Activated CD4-positive, alpha-beta T cell treated with anti-CD3 and anti-CD28 coated beads for 36 hours (primary cell): ENCODE measurements at regions of chr19 and their contacts with region 1.

Region 1: DNA sequence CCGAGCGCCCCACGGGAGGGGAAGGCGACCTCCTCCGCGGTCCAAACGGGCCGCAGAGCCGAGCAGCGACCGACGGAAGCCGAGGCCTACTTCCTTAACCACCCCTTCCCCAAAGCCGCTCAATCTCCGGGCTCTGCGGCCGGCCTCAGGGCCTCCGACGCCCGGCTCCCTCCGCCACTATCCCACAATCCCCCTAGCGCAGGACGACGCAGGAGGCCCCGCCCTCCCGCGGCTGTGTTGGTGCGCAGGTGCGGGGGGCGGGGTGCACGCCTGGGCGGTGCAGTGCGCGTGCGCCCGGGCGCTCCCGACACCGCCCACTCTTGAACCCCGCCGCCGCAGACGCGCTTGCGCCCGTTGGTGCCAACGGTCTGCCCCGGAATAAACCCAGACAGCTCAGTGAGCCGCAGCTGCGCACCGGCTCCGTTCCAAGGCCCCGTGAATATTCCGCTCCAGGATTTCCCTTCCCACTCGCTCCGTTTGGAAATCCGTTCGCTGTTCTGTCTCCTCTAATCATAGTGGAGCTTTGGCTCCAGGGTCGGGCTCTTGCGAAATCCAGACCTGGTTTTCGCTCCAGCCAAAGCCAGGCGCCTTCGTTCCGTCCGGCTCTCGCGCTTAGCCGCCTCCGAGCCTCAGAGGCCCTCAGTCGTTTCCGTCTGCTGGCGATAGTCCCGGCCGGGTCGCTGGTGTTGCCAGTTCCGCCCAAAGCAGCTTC is at the start of gene PPP6R1:
- DNase-seq: peak; percentile 98
- ATAC-seq: peak; percentile 69
- H3K4me3 Mint-ChIP-seq: peak within 1 kb of the TSS; percentile 95
- H3K27ac Mint-ChIP-seq: peak within 1 kb of the TSS; percentile 98
- H3K4me1 Mint-ChIP-seq: peaks cover 22% of the 10 kb centered on the region
- H3K27me3 Mint-ChIP-seq: no peaks in the 10 kb centered on the region
- total RNA-seq, gene PPP6R1: 177 to 201 TPM

Region 2: DNA sequence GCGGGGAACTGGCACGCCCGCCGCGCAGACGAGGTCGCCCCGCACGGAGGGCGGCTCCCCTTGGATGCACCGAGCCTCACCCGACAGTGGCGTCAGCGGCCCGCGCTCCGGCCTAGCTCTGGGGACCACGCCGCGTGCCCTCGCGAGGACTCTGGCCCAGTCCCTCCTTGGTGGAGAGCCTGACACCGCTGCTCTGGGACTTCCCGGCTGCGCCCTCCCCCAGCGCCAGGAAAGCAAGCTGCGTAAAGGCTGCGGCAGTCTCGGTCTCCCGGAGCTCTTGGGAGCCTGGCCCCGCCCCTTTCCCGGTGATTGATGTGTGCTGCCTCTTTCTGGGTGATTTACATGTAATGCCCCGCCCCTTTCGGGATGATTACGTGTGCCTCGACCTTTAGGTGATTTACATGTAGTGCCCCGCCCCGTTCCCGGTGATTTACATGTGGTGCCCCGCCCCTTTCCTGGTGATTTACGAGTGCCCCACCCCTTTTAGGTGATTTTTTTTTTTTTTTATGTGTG is 795.4 kb before region 1 on chr19 and contains the start of gene LENG9:
- CTCF ChIA-PET with region 1: no interaction called
- POLR2A ChIA-PET with region 1: no interaction called
- intact Hi-C with region 1: loop called in 1 of 2 experiments (anchors 2 kb)
- DNase-seq: peak; percentile 100
- ATAC-seq: peak; percentile 69
- H3K4me3 Mint-ChIP-seq: peak within 1 kb of the TSS; percentile 80
- H3K27ac Mint-ChIP-seq: peak within 1 kb of the TSS; percentile 91
- H3K4me1 Mint-ChIP-seq: peaks cover 26% of the 10 kb centered on the region
- H3K27me3 Mint-ChIP-seq: peaks cover 6% of the 10 kb centered on the region
- total RNA-seq, gene LENG9: 5.0 to 5.1 TPM

Region 3: GRCh38 chr19:55117636-55118391 is 141.2 kb before region 1 on chr19 and contains the start of gene PPP1R12C:
- CTCF ChIA-PET with region 1: interaction called, 3 read pairs
- POLR2A ChIA-PET with region 1: no interaction called
- intact Hi-C with region 1: loop called in 1 of 2 experiments (anchors 1 kb)
- DNase-seq: peak; percentile 99
- ATAC-seq: peak; percentile 96
- H3K4me3 Mint-ChIP-seq: peak within 1 kb of the TSS; percentile 95
- H3K27ac Mint-ChIP-seq: peak within 1 kb of the TSS; percentile 97
- H3K4me1 Mint-ChIP-seq: peaks cover 24% of the 10 kb centered on the region
- H3K27me3 Mint-ChIP-seq: peaks cover 2% of the 10 kb centered on the region
- total RNA-seq, gene PPP1R12C: 66.1 to 69.8 TPM

Region 4: GRCh38 chr19:55279770-55280643 is 21.0 kb after region 1 on chr19 and contains the start of gene HSPBP1:
- CTCF ChIA-PET with region 1: interaction called, 6 read pairs
- POLR2A ChIA-PET with region 1: interaction called, 12 read pairs
- intact Hi-C with region 1: loop called (anchors 1 kb)
- DNase-seq: peak; percentile 98
- ATAC-seq: peak; percentile 92
- H3K4me3 Mint-ChIP-seq: peak within 1 kb of the TSS; percentile 100
- H3K27ac Mint-ChIP-seq: peak within 1 kb of the TSS; percentile 98
- H3K4me1 Mint-ChIP-seq: peaks cover 24% of the 10 kb centered on the region
- H3K27me3 Mint-ChIP-seq: no peaks in the 10 kb centered on the region
- total RNA-seq, gene HSPBP1: 41.1 to 45.2 TPM

Region 5: DNA sequence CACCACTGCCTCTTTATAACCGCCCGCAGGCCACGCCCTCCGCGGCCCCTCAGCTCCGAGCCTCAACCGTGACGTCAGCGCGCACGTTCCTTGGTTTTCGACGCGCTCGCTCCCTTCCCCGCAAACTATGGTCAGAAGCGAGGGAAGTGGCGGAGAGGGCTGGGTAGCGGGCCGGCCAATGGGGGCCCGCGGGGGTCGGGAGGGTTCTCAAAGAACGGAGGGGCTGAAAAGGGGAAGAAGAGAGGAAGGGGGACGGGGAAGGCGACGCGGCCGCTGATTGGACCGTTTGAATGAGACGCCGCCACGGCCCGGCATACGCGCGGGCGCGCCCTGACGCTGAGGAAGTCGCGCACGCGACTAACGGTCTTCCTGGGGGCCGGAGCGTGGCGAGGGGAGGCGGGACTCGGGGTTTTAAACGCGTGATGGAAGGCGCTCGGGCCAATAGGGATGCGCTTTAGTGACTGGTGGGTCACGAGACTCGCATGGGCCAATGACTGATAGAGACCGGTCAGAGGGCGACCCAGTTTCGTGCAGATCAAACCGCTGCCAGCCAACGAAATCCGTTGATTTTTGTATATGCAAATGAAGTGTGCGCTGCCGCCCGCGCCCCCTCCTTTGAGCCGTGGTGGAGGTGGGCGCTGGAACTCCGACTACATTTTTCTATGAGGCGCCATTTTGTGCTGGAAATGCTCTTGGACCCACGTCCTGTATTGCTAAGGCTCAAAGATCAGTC is 149.0 kb after region 1 on chr19:
- CTCF ChIA-PET with region 1: no interaction called
- POLR2A ChIA-PET with region 1: interaction called, 4 read pairs
- intact Hi-C with region 1: loop called (anchors 1 to 2 kb)
- DNase-seq: peak; percentile 98
- ATAC-seq: peak; percentile 96
- H3K4me3 Mint-ChIP-seq: peak overlapping the region; percentile 90
- H3K27ac Mint-ChIP-seq: peak overlapping the region; percentile 96
- H3K4me1 Mint-ChIP-seq: peaks cover 22% of the 10 kb centered on the region
- H3K27me3 Mint-ChIP-seq: no peaks in the 10 kb centered on the region

Region 6: GRCh38 chr19:55653758-55654539 is 395.0 kb after region 1 on chr19:
- CTCF ChIA-PET with region 1: interaction called, 3 read pairs
- POLR2A ChIA-PET with region 1: no interaction called
- intact Hi-C with region 1: loop called in 1 of 2 experiments (anchors 1 kb)
- DNase-seq: peak; percentile 99
- ATAC-seq: peak; percentile 84
- H3K4me3 Mint-ChIP-seq: peak overlapping the region; percentile 86
- H3K27ac Mint-ChIP-seq: peak overlapping the region; percentile 98
- H3K4me1 Mint-ChIP-seq: peaks cover 37% of the 10 kb centered on the region
- H3K27me3 Mint-ChIP-seq: no peaks in the 10 kb centered on the region